ENCODE measurements at regions of chr2 and their contacts with region 1.

Region 1: DNA sequence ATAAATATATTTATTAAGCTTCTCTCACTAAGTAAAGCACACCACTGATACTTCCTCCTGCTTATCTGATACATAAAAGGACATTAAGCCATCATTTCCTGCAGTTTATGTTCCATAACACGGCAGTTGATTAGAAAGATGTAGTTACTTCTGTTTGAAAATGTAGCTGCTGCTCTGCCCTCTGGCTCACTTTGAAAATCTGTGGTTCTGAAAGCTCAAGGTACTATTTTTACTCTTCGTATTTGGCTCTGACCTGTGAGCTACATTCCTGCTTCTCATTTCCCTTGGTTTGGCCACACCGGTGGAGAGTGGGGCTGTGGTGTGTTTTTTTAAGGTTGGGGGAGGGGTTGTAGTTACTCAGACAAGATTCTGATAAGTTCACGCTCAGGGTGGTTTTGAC is 12.8 kb upstream of the TTN start:
- DNase-seq: peak; percentile 55
- ATAC-seq: peak; percentile 82
- H3K4me3 Mint-ChIP-seq: peak overlapping the region; percentile 56
- H3K27ac Mint-ChIP-seq: peak overlapping the region; percentile 87
- H3K4me1 Mint-ChIP-seq: peaks cover 32% of the 10 kb centered on the region
- H3K27me3 Mint-ChIP-seq: no peaks in the 10 kb centered on the region

Region 2: DNA sequence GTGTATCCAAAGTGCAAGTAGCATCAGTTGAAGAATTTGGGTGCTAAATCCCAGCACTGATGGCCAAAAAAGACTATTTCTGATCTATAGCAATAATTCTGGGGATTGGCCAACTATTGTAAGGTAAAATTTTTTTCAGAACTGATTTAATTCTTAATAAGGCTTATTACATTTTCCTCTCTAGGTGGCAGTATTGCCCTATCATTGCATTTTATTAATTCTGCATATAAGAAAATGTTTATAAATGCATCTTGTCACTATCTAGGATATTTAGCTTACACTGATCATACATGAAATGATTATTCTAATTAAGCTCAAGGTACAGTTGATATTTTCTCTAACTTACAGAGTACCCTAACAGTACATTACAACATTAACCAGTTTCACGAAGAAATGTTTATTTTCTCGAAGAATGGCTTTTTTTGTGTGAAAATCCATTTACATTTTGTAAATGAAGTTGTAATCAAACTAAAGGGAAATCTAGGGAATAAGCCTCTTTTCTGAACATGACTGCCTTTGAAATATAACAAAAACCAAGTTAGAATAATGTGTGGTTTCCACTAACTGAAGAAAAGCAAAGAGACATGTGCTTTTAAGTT is 23.8 kb before region 1 on chr2:
- CTCF ChIA-PET with region 1: interaction called, 16 read pairs
- POLR2A ChIA-PET with region 1: no interaction called
- DNase-seq: no peak
- ATAC-seq: no peak
- H3K4me3 Mint-ChIP-seq: no peak overlapping the region
- H3K27ac Mint-ChIP-seq: no peak overlapping the region
- H3K4me1 Mint-ChIP-seq: no peaks in the 10 kb centered on the region
- H3K27me3 Mint-ChIP-seq: no peaks in the 10 kb centered on the region

Region 3: DNA sequence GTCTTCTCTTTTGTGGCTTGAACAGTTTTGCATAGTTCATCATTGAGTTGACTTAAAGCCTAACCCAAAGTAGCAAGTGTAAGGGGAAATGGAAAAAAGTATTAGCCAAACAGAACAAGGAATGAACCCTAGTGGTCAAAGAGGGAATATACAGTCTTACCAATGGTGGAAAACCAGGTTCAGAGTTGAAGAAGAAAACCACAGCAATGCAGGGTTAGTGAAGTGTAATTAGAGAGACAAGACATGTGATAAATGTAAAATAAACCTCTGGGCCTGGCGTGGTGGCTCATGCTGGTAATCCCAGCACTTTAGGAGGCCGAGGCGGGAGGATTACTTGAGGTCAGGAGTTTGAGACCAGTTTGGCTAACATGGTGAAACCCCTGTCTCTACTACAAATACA is 15.2 kb before region 1 on chr2:
- CTCF ChIA-PET with region 1: interaction called, 21 read pairs
- POLR2A ChIA-PET with region 1: no interaction called
- DNase-seq: no peak
- ATAC-seq: no peak
- H3K4me3 Mint-ChIP-seq: no peak overlapping the region
- H3K27ac Mint-ChIP-seq: no peak overlapping the region
- H3K4me1 Mint-ChIP-seq: peaks cover 3% of the 10 kb centered on the region
- H3K27me3 Mint-ChIP-seq: no peaks in the 10 kb centered on the region

Region 4: GRCh38 chr2:178891265-178891958 is 71.4 kb after region 1 on chr2:
- CTCF ChIA-PET with region 1: interaction called, 11 read pairs
- POLR2A ChIA-PET with region 1: no interaction called
- DNase-seq: peak; percentile 81
- ATAC-seq: peak; percentile 85
- H3K4me3 Mint-ChIP-seq: no peak overlapping the region
- H3K27ac Mint-ChIP-seq: no peak overlapping the region
- H3K4me1 Mint-ChIP-seq: peaks cover 7% of the 10 kb centered on the region
- H3K27me3 Mint-ChIP-seq: no peaks in the 10 kb centered on the region